ENCODE measurements at regions of chr4 and their contacts with region 1.

Region 1: DNA sequence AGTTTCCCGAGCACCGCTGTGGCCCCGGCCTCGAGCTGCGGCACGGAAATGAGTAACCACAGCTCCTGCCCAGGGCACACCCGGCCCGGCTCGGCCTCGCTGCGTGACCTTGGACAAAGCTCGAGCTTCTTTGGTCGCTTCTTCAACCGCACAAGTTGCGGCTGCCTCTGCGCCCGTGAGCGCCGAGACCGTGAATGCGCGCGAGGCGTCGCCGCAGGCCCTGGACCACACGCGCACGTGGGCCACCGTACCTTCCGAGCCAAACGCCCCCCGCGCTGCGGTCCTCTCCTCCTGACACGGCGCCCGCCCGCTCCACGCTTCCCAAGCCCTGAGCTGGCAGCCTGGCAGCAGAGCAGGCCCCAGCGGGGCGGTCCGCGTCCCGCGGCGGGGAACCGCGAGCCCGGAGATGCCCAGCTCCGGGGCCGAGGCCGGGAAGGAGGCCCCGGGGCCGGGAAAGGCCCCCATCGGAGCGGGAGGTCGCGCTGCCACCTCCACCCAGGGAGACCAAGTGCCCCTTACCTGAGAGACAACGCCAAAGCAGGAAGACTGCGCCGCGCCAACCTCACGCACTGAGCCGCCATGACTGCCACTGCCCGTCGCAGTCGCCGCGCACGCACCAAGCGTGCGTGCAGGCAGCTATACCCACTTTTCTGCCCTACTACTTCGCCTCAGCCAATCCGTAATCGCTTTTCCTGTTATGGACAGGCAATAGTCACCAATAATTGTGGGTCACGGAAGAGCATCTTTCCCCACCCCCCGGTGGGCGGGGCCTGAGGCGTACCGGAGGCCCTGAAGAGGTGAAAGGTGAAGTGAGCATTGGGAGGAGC is at the start of gene GRPEL1:
- DNase-seq: peak; percentile 100
- ATAC-seq: peak; percentile 96
- H3K4me3 ChIP-seq: peak within 1 kb of the TSS; percentile 95
- H3K4me3 Mint-ChIP-seq: peak within 1 kb of the TSS; percentile 89 to 98 (median 95)
- H3K27ac ChIP-seq: peak within 1 kb of the TSS; percentile 88
- H3K27ac Mint-ChIP-seq: peak within 1 kb of the TSS; percentile 91 to 98 (median 96)
- H3K4me1 ChIP-seq: peaks cover 27% of the 10 kb centered on the region in 2 donors
- H3K4me1 Mint-ChIP-seq: peaks cover 35 to 70% (median 49%) of the 10 kb centered on the region in 7 donors
- H3K27me3 ChIP-seq: no peaks in the 10 kb centered on the region
- H3K27me3 Mint-ChIP-seq: peaks cover 0 to 13% (median 0%) of the 10 kb centered on the region in 5 donors
- total RNA-seq, gene GRPEL1: 34.5 to 53.3 (median 49.1) TPM

Region 2: GRCh38 chr4:6250235-6250983 is 817.3 kb before region 1 on chr4:
- CTCF ChIA-PET with region 1: no interaction called
- POLR2A ChIA-PET with region 1: no interaction called
- intact Hi-C with region 1: loop called in 1 of 2 experiments (anchors 2 kb)
- DNase-seq: peak in 7 of 9 donors; percentile 39 to 71 (median 60)
- ATAC-seq: peak; percentile 72
- H3K4me3 ChIP-seq: no peak overlapping the region
- H3K4me3 Mint-ChIP-seq: no peak overlapping the region
- H3K27ac ChIP-seq: no peak overlapping the region
- H3K27ac Mint-ChIP-seq: no peak overlapping the region
- H3K4me1 ChIP-seq: no peaks in the 10 kb centered on the region
- H3K4me1 Mint-ChIP-seq: peaks cover 0 to 6% (median 0%) of the 10 kb centered on the region in 7 donors
- H3K27me3 ChIP-seq: no peaks in the 10 kb centered on the region
- H3K27me3 Mint-ChIP-seq: peaks cover 38 to 52% (median 49%) of the 10 kb centered on the region in 5 donors

Region 3: DNA sequence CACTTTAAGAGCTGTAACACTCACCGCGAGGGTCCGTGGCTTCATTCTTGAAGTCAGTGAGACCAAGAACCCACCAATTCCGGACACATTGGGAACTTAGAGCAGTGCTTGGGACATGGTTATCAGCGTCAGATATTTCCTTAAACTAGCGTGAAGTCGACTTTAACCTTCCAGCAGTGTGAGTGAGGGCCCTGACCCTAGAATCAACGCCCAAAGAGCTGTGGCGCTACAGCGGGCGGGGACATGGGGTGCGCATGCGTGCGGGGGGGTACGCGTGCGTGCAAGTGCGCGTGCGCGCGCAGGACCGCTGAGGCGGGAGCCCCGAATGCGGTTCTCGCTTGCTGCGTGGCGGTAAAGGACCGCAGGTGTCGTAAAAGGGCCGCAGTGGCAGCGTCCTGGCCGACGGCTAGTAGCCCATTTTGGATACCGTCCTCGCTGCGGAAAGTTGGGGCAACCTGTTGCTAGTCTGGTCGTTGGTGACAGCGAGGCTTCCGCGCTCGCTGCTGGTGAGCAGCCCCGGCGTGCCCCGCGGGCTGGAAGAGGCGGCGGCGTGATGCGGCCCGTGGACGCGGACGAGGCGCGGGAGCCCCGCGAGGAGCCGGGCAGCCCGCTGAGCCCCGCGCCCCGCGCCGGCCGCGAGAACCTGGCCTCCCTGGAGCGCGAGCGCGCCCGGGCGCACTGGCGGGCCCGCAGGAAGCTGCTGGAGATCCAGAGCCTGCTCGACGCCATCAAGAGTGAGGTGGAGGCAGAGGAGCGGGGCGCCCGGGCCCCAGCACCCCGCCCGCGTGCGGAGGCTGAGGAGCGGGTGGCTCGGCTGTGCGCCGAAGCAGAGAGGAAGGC is 393.8 kb before region 1 on chr4:
- CTCF ChIA-PET with region 1: interaction called, 4 read pairs
- POLR2A ChIA-PET with region 1: interaction called, 18 read pairs
- intact Hi-C with region 1: loop called (anchors 1 kb)
- DNase-seq: peak; percentile 89 to 97 (median 95)
- ATAC-seq: peak; percentile 93
- H3K4me3 ChIP-seq: peak overlapping the region; percentile 74
- H3K4me3 Mint-ChIP-seq: peak overlapping the region; percentile 90 to 100 (median 98)
- H3K27ac ChIP-seq: peak overlapping the region; percentile 83
- H3K27ac Mint-ChIP-seq: peak overlapping the region; percentile 88 to 100 (median 98)
- H3K4me1 ChIP-seq: peaks cover 30 to 34% of the 10 kb centered on the region in 2 donors
- H3K4me1 Mint-ChIP-seq: peaks cover 33 to 53% (median 50%) of the 10 kb centered on the region in 7 donors
- H3K27me3 ChIP-seq: no peaks in the 10 kb centered on the region
- H3K27me3 Mint-ChIP-seq: peaks cover 0 to 3% (median 0%) of the 10 kb centered on the region in 5 donors

Region 4: GRCh38 chr4:6716018-6716911 is 351.4 kb before region 1 on chr4 and contains the start of gene BLOC1S4:
- CTCF ChIA-PET with region 1: interaction called, 53 read pairs
- POLR2A ChIA-PET with region 1: interaction called, 30 read pairs
- intact Hi-C with region 1: loop called (anchors 1 kb)
- DNase-seq: peak; percentile 86 to 95 (median 91)
- ATAC-seq: peak; percentile 92
- H3K4me3 ChIP-seq: peak within 1 kb of the TSS; percentile 86
- H3K4me3 Mint-ChIP-seq: peak within 1 kb of the TSS; percentile 89 to 99 (median 95)
- H3K27ac ChIP-seq: peak within 1 kb of the TSS; percentile 90
- H3K27ac Mint-ChIP-seq: peak within 1 kb of the TSS; percentile 94 to 100 (median 97)
- H3K4me1 ChIP-seq: peaks cover 19 to 20% of the 10 kb centered on the region in 2 donors
- H3K4me1 Mint-ChIP-seq: peaks cover 22 to 52% (median 36%) of the 10 kb centered on the region in 7 donors
- H3K27me3 ChIP-seq: no peaks in the 10 kb centered on the region
- H3K27me3 Mint-ChIP-seq: peaks cover 0 to 8% (median 0%) of the 10 kb centered on the region in 5 donors
- total RNA-seq, gene BLOC1S4: 18.7 to 45.9 (median 25.0) TPM

Region 5: GRCh38 chr4:6859543-6859942 is 208.1 kb before region 1 on chr4:
- CTCF ChIA-PET with region 1: no interaction called
- POLR2A ChIA-PET with region 1: no interaction called
- intact Hi-C with region 1: no loop called
- DNase-seq: no peak
- ATAC-seq: no peak
- H3K4me3 ChIP-seq: no peak overlapping the region
- H3K4me3 Mint-ChIP-seq: no peak overlapping the region
- H3K27ac ChIP-seq: no peak overlapping the region
- H3K27ac Mint-ChIP-seq: peak overlapping the region in 1 of 9 donors; percentile 19
- H3K4me1 ChIP-seq: peaks cover 0 to 12% of the 10 kb centered on the region in 2 donors
- H3K4me1 Mint-ChIP-seq: peaks cover 0 to 15% (median 9%) of the 10 kb centered on the region in 7 donors
- H3K27me3 ChIP-seq: no peaks in the 10 kb centered on the region
- H3K27me3 Mint-ChIP-seq: no peaks in the 10 kb centered on the region

Region 6: DNA sequence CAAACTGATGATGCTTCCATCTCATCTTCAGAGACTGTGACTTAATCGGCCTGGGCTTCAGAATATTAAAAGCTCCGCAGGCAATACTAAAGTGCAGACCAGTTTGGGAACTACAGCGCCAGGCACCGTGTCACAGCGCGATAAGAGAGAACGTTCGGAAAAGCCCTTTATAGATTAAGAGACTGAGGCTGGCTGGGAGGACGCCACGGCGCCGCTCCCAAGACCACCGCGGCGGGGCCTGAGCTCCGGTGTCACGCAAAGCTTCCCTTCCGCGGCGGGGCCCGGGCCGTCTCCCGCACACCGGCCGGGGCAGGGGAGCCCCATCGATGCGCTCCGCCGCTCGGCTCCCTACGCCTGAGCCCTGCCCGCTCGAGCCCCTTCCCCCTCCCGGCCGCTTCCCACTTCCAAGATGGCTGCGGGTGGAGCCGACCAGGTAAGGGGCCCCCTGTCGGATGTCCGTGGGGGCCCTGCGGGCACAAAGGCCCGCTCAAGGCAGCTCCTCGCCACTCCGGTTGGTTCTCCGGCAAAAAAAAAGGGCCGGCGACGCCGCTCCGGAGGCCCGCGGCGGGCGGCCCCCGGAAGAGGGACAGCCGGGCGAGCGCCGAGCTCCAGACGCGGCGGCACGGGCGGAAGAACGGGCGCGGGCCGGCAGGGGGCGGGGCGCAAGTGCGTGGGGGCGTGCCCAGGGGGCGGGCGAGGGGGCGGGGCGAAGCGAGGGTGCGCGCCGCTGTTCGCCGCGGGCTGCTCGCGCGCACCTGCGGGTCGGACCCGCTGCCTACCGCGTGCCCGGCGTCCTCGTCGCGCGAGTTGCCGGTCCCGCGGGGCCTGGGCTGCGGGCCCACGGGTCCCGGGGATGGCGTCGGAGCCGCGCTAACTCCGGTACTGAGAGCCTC is 158.3 kb before region 1 on chr4 and contains the start of gene TBC1D14:
- CTCF ChIA-PET with region 1: interaction called, 18 read pairs
- POLR2A ChIA-PET with region 1: interaction called, 59 read pairs
- intact Hi-C with region 1: loop called (anchors 1 kb)
- DNase-seq: peak; percentile 84 to 93 (median 90)
- ATAC-seq: peak; percentile 94
- H3K4me3 ChIP-seq: peak within 1 kb of the TSS; percentile 70
- H3K4me3 Mint-ChIP-seq: peak within 1 kb of the TSS; percentile 89 to 95 (median 91)
- H3K27ac ChIP-seq: peak within 1 kb of the TSS; percentile 97
- H3K27ac Mint-ChIP-seq: peak within 1 kb of the TSS; percentile 81 to 94 (median 91)
- H3K4me1 ChIP-seq: peaks cover 20 to 38% of the 10 kb centered on the region in 2 donors
- H3K4me1 Mint-ChIP-seq: peaks cover 45 to 60% (median 55%) of the 10 kb centered on the region in 7 donors
- H3K27me3 ChIP-seq: no peaks in the 10 kb centered on the region
- H3K27me3 Mint-ChIP-seq: peaks cover 0 to 2% (median 0%) of the 10 kb centered on the region in 5 donors
- total RNA-seq, gene TBC1D14: 42.9 to 72.2 (median 58.3) TPM

Region 7: DNA sequence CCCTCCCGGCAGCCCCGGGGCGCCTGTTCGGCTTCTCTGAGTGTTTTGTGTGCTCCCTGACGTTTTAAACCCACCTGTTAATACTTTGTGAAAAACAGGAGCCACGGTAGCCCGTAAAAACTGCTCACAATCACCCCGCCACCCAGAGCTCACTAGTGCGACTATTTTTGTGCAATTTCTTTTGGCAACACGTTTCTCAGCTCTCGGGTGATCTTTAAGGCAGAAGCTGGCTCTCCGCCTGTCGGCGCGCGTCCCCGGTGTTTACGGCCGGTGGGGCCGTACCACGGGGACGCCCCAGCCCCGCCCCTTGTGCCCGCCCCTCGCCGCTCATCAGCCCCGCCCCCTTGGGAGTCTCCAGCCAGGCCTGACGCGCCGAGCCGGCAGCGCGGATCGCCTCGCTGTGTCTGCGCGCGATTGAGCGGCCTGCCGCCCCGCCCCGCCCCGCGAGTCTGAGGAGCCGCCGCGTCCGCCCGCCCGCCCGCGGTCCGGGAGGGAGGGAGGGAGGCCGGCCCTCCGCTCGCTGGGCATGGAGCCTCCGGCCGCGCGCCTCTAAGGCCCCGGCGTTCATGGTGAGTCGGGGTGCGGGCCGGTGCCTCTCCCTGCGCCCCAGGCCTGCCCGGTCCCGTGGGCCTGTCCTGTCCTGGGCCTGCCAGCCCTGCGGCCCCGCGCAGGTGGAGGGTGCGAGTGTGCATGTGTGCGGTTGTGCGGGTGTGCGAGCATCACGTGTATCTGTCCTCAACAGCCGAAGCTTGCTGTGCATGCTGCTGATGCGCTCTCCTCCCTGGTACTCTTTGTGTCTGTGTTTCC is 80.7 kb before region 1 on chr4:
- CTCF ChIA-PET with region 1: interaction called, 7 read pairs
- POLR2A ChIA-PET with region 1: interaction called, 33 read pairs
- intact Hi-C with region 1: loop called (anchors 1 kb)
- DNase-seq: peak; percentile 87 to 95 (median 92)
- ATAC-seq: peak; percentile 98
- H3K4me3 ChIP-seq: peak overlapping the region; percentile 82
- H3K4me3 Mint-ChIP-seq: peak overlapping the region; percentile 94 to 100 (median 97)
- H3K27ac ChIP-seq: peak overlapping the region; percentile 86
- H3K27ac Mint-ChIP-seq: peak overlapping the region; percentile 89 to 99 (median 98)
- H3K4me1 ChIP-seq: peaks cover 29 to 37% of the 10 kb centered on the region in 2 donors
- H3K4me1 Mint-ChIP-seq: peaks cover 57 to 93% (median 84%) of the 10 kb centered on the region in 7 donors
- H3K27me3 ChIP-seq: no peaks in the 10 kb centered on the region
- H3K27me3 Mint-ChIP-seq: no peaks in the 10 kb centered on the region

Region 8: GRCh38 chr4:7052923-7053715 is 14.5 kb before region 1 on chr4:
- CTCF ChIA-PET with region 1: interaction called, 4 read pairs
- POLR2A ChIA-PET with region 1: interaction called, 28 read pairs
- intact Hi-C with region 1: no loop called
- DNase-seq: no peak
- ATAC-seq: peak; percentile 83
- H3K4me3 ChIP-seq: no peak overlapping the region
- H3K4me3 Mint-ChIP-seq: peak overlapping the region in 6 of 10 donors; percentile 15 to 60 (median 32)
- H3K27ac ChIP-seq: peak overlapping the region; percentile 40
- H3K27ac Mint-ChIP-seq: peak overlapping the region in 8 of 9 donors; percentile 38 to 78 (median 67)
- H3K4me1 ChIP-seq: peaks cover 0 to 15% of the 10 kb centered on the region in 2 donors
- H3K4me1 Mint-ChIP-seq: peaks cover 19 to 46% (median 33%) of the 10 kb centered on the region in 7 donors
- H3K27me3 ChIP-seq: no peaks in the 10 kb centered on the region
- H3K27me3 Mint-ChIP-seq: no peaks in the 10 kb centered on the region

Region 9: GRCh38 chr4:7719354-7720174 is 651.9 kb after region 1 on chr4:
- CTCF ChIA-PET with region 1: no interaction called
- POLR2A ChIA-PET with region 1: no interaction called
- intact Hi-C with region 1: no loop called
- DNase-seq: peak; percentile 8 to 67 (median 48)
- ATAC-seq: peak; percentile 73
- H3K4me3 ChIP-seq: no peak overlapping the region
- H3K4me3 Mint-ChIP-seq: peak overlapping the region in 3 of 10 donors; percentile 21 to 45 (median 41)
- H3K27ac ChIP-seq: no peak overlapping the region
- H3K27ac Mint-ChIP-seq: peak overlapping the region in 1 of 9 donors; percentile 27
- H3K4me1 ChIP-seq: no peaks in the 10 kb centered on the region
- H3K4me1 Mint-ChIP-seq: peaks cover 0 to 11% (median 6%) of the 10 kb centered on the region in 7 donors
- H3K27me3 ChIP-seq: peaks cover 0 to 3% of the 10 kb centered on the region in 2 donors
- H3K27me3 Mint-ChIP-seq: peaks cover 0 to 33% (median 7%) of the 10 kb centered on the region in 5 donors

Measured in naive thymus-derived CD4-positive, alpha-beta T cell (primary cell).